Dendritic cell treated with granulocyte-macrophage colony-stimulating factor and Interleukin-4, amounts not matched to agents 40 ng/mL and 50 ng/mL, for 4 days (primary cell): ENCODE measurements at regions of chr5 and their contacts with region 1.

Region 1: DNA sequence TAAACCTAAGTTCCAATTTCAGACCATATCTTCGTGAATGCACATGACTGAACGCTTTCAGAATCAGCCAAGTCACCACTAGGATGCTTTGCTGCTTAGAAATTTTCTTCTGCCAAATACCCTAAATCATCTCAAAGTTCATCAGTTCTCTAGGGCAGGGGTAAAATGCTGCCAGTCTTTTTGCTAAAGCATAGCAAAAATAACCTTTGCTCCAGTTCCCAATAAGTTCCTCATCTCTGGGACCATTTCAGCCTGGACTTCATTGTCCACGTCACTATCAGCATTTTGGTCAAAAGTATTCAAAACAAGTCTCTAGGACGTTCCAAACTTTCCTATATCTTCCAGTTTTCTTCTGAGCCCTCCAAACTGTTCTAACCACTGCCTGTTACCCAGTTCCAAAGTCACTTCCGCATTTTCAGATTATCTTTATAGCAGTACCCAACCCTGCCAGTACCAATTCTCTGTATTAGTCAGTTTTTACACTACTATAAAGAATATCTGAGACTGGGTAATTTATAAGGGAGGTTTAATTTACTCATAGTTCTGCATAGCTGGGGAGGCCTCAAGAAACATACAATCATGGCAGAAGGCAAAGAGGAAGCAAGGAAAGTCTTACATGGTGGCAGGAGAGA is 74.8 kb downstream of the NR3C1 start:
- H3K4me3 Mint-ChIP-seq: no peak overlapping the region
- H3K27ac Mint-ChIP-seq: peak overlapping the region; percentile 51
- H3K4me1 Mint-ChIP-seq: peaks cover 43% of the 10 kb centered on the region
- H3K27me3 Mint-ChIP-seq: no peaks in the 10 kb centered on the region

Region 2: GRCh38 chr5:142253938-142254337 is 1074.8 kb before region 1 on chr5:
- intact Hi-C with region 1: no loop called
- H3K4me3 Mint-ChIP-seq: no peak overlapping the region
- H3K27ac Mint-ChIP-seq: no peak overlapping the region
- H3K4me1 Mint-ChIP-seq: no peaks in the 10 kb centered on the region
- H3K27me3 Mint-ChIP-seq: peaks cover 21% of the 10 kb centered on the region

Region 3: DNA sequence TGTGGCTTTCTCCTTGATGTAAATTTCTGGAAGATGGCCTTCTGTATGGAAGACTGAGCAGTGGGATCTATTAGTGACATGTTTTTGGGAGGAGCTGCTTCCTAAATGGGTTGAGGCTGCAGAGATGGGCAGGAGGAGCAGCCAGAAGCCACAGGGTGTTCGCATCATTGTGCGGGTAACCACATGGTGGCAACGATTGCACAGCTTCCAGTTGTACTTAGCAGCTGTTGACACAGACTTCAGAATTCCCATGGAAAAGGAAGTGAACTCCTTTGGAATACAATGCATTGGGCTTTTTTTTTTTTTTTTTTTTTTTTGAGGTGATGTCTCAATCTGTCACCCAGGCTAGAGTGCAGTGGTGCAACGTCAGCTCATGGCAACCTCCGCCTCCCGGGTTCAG is 222.5 kb before region 1 on chr5:
- intact Hi-C with region 1: loop called (anchors 5 kb)
- H3K4me3 Mint-ChIP-seq: no peak overlapping the region
- H3K27ac Mint-ChIP-seq: no peak overlapping the region
- H3K4me1 Mint-ChIP-seq: peaks cover 66% of the 10 kb centered on the region
- H3K27me3 Mint-ChIP-seq: no peaks in the 10 kb centered on the region